ENCODE measurements at regions of chr4 and their contacts with region 1.

Region 1: GRCh38 chr4:75724066-75724866 is at the start of gene USO1:
- DNase-seq: peak; percentile 100
- total RNA-seq, gene USO1: 70.5 TPM

Region 2: DNA sequence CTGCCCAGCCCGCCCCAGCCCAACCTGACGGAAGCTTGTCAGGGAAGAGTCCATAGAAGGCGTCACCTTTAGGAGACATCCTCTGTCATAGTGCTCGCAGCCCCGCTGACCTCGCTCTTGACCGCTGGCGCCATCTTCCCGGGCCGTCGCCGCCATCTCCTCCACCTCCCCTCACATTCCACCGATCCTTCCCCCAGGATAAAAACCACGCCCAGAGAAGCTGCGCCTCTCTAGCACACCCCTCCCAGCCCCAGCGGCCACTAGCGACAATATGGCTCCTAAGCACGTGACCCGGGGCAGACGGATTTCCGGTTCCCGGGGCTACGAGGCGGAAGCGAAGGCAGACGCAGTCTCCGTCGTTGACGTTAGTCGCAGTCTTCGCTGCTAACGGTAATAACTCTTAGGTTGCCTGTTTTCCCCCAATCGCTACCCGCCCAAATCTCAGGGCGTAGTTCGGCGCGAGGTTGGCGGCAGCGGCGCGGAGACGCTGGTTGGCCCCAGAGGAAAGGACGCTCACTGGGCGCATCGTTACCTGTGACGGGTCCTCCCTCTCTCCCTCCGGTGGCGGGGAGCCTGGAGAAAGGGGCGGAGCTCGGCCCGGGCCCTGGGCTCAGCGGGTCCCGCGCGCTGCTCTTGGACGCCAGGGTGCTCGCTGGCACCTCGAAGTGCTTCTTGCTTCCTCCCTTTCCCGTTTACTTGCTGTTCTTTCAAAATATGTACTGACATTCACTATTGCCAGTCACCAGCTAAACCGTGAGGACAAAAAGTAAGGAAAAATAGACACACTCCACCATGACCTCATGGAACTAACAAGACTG is 209.9 kb before region 1 on chr4 and contains the starts of genes RCHY1 and THAP6:
- intact Hi-C with region 1: loop called (anchors 10 kb)
- DNase-seq: peak; percentile 99
- total RNA-seq, gene RCHY1: 43.4 TPM
- total RNA-seq, gene THAP6: 22.6 TPM

Region 3: DNA sequence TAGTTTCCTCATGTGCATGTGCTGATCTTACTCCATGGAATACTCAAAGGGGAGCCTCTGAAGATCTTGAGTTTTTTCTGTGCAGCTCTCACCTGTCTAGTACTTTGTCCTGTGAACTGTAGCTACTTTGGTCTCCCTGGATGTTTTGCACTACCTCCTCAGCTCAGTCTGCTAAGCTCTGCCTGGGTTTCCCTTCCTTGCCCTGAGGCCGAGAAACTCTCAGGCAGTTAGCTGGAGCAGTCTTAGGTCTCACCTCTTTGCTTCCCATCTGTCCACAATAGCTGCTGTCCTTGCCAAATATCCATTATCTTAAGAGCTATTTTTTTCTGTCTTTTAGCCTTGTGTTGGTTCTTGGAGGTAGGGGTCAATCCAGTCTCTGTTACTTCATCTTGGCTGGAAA is 198.4 kb before region 1 on chr4:
- intact Hi-C with region 1: no loop called
- DNase-seq: no peak

Region 4: DNA sequence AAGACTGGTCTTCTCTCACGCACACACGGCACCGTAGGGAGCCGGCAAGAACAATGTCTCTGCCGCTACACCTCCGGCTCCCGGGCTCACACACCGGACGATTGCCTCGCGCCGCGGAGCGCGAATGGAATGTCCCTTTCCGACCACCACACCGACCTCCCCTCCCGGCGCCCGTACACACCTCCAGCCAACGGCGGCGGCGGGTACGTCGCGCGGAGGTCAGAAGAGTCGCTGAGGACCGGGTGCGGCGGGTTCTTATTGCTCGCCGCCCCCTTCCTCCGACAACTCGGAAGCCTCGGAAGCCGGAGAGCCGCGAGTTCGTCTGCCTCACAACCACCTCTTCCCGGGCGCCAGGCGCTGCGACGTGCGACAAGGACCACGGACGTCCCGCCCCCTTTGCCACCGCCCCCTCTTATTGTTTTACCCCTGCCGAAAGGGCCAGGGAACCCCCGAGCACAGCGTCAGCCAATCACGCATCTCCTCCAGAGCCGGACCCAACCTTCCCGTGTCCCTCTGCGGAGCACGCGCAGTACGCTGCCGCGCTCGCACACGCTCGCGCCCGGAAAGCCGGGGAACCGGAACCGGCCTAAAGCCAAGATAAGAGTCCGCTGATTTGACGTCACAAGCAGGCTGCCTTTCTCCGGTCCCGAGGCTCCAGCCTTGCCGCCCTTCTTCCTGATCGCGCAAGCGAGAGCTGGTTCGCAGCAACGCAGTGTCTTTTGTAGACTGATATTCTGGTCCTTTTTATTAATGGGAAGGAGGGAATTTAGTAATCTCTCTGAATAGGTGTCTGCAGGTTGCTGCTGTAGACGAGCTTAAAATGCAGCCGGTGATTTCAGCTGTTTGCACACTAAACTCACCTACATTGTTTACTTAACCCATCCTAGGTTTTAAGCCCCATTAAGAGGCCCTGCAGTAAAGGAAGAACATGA is 51.0 kb before region 1 on chr4 and contains the start of gene G3BP2:
- intact Hi-C with region 1: loop called (anchors 1 kb)
- DNase-seq: peak; percentile 99
- total RNA-seq, gene G3BP2: 78.3 TPM

Region 5: GRCh38 chr4:76251441-76252270 is 527.4 kb after region 1 on chr4 and contains the start of gene FAM47E:
- intact Hi-C with region 1: no loop called
- DNase-seq: peak; percentile 89
- total RNA-seq, gene FAM47E: 2.9 TPM

Region 6: GRCh38 chr4:76459291-76459723 is 735.0 kb after region 1 on chr4:
- intact Hi-C with region 1: no loop called
- DNase-seq: no peak